Naive thymus-derived CD4-positive, alpha-beta T cell (primary cell): ENCODE measurements at regions of chr5 and their contacts with region 1.

Region 1: GRCh38 chr5:141618804-141619554 is at the start of gene DIAPH1:
- DNase-seq: peak; percentile 91 to 98 (median 96)
- ATAC-seq: peak; percentile 98
- H3K4me3 ChIP-seq: peak within 1 kb of the TSS; percentile 77
- H3K4me3 Mint-ChIP-seq: peak within 1 kb of the TSS; percentile 94 to 100 (median 100)
- H3K27ac ChIP-seq: peak within 1 kb of the TSS; percentile 97
- H3K27ac Mint-ChIP-seq: peak within 1 kb of the TSS; percentile 91 to 99 (median 95)
- H3K4me1 ChIP-seq: peaks cover 11 to 22% of the 10 kb centered on the region in 2 donors
- H3K4me1 Mint-ChIP-seq: peaks cover 44 to 61% (median 56%) of the 10 kb centered on the region in 7 donors
- H3K27me3 ChIP-seq: no peaks in the 10 kb centered on the region
- H3K27me3 Mint-ChIP-seq: no peaks in the 10 kb centered on the region
- total RNA-seq, gene DIAPH1: 163 to 278 (median 173) TPM

Region 2: GRCh38 chr5:141186897-141187512 is 432.0 kb before region 1 on chr5 and contains the start of gene PCDHB9:
- CTCF ChIA-PET with region 1: no interaction called
- POLR2A ChIA-PET with region 1: no interaction called
- intact Hi-C with region 1: no loop called
- DNase-seq: peak in 1 of 9 donors; percentile 14
- ATAC-seq: no peak
- H3K4me3 ChIP-seq: no peak within 1 kb of the TSS
- H3K4me3 Mint-ChIP-seq: peak within 1 kb of the TSS; percentile 15 to 64 (median 35)
- H3K27ac ChIP-seq: no peak within 1 kb of the TSS
- H3K27ac Mint-ChIP-seq: no peak within 1 kb of the TSS
- H3K4me1 ChIP-seq: no peaks in the 10 kb centered on the region
- H3K4me1 Mint-ChIP-seq: peaks cover 0 to 12% (median 5%) of the 10 kb centered on the region in 7 donors
- H3K27me3 ChIP-seq: no peaks in the 10 kb centered on the region
- H3K27me3 Mint-ChIP-seq: peaks cover 3 to 86% (median 76%) of the 10 kb centered on the region in 5 donors
- total RNA-seq, gene PCDHB9: 1.2 TPM in 1 of 5 experiments, not detected in the others

Region 3: DNA sequence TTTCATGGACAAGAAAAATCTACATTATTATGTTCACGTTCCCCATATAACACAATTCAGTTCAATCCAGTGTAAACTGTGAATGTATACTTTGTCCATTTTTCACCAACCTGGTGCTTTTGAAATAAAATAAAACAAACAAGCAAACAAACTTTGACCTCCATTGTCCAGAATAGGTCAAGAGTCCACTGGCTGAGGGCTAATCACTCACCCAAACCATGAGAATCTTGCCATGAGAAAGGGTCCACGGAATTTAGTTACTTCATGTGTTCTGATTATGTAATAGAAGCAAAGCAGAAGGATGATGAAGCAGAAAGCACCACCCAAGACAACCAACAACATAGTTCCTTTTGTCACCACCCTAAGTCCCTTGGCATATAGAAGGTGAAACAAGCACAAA is 28.9 kb before region 1 on chr5:
- CTCF ChIA-PET with region 1: interaction called, 222 read pairs
- POLR2A ChIA-PET with region 1: interaction called, 124 read pairs
- intact Hi-C with region 1: loop called (anchors 1 kb)
- DNase-seq: no peak
- ATAC-seq: peak; percentile 37
- H3K4me3 ChIP-seq: no peak overlapping the region
- H3K4me3 Mint-ChIP-seq: no peak overlapping the region
- H3K27ac ChIP-seq: no peak overlapping the region
- H3K27ac Mint-ChIP-seq: peak overlapping the region in 1 of 9 donors; percentile 56
- H3K4me1 ChIP-seq: peaks cover 12 to 13% of the 10 kb centered on the region in 2 donors
- H3K4me1 Mint-ChIP-seq: peaks cover 40 to 71% (median 58%) of the 10 kb centered on the region in 7 donors
- H3K27me3 ChIP-seq: no peaks in the 10 kb centered on the region
- H3K27me3 Mint-ChIP-seq: no peaks in the 10 kb centered on the region

Region 4: DNA sequence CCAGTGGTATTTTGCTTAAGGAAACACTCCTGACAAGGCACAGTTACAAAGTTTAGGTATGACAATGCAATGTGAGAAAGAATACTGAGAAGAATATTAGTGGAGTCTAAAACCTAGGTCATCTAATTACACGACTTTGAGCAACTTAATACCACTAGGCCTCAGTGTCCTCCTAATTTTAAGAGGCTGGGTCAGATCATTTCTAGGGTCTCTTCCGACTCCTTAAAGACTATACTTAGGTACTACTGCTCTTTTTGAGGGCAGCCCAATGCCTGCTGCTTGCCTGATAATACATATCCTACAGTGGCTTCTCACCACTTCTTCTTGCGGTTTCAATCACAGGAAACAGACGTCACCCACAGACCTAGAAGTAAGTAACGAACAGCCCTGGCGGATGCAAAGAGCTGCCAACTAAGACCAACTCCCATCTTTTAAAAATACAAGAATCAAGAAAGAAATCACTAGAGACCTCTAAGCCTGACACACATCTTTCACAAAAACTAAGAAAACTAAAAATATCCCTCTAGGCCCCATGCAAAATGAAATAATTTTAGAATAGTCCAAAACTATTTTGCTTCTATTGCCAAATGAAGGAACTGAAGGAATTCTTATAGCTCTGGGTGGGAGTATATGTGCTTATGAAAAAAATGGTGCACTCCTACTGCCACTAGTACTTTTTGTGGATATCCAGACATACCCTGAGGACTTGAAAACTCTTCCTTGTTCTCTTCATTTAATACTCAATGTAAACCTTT is 13.3 kb before region 1 on chr5:
- CTCF ChIA-PET with region 1: interaction called, 43 read pairs
- POLR2A ChIA-PET with region 1: interaction called, 71 read pairs
- intact Hi-C with region 1: loop called (anchors 1 kb)
- DNase-seq: peak in 8 of 9 donors; percentile 60 to 90 (median 88)
- ATAC-seq: peak; percentile 95
- H3K4me3 ChIP-seq: peak overlapping the region; percentile 37
- H3K4me3 Mint-ChIP-seq: peak overlapping the region; percentile 13 to 88 (median 80)
- H3K27ac ChIP-seq: peak overlapping the region; percentile 72
- H3K27ac Mint-ChIP-seq: peak overlapping the region; percentile 83 to 96 (median 89)
- H3K4me1 ChIP-seq: peaks cover 86 to 87% of the 10 kb centered on the region in 2 donors
- H3K4me1 Mint-ChIP-seq: peaks cover 60 to 97% (median 90%) of the 10 kb centered on the region in 7 donors
- H3K27me3 ChIP-seq: no peaks in the 10 kb centered on the region
- H3K27me3 Mint-ChIP-seq: no peaks in the 10 kb centered on the region

Region 5: GRCh38 chr5:141650851-141651727 is 32.1 kb after region 1 on chr5 and contains the start of gene FCHSD1:
- CTCF ChIA-PET with region 1: interaction called, 7 read pairs
- POLR2A ChIA-PET with region 1: interaction called, 5 read pairs
- intact Hi-C with region 1: loop called in 1 of 2 experiments (anchors 1 kb)
- DNase-seq: peak; percentile 64 to 88 (median 67)
- ATAC-seq: peak; percentile 98
- H3K4me3 ChIP-seq: peak within 1 kb of the TSS; percentile 62
- H3K4me3 Mint-ChIP-seq: peak within 1 kb of the TSS; percentile 60 to 97 (median 90)
- H3K27ac ChIP-seq: peak within 1 kb of the TSS; percentile 75
- H3K27ac Mint-ChIP-seq: peak within 1 kb of the TSS; percentile 56 to 95 (median 89)
- H3K4me1 ChIP-seq: peaks cover 15 to 19% of the 10 kb centered on the region in 2 donors
- H3K4me1 Mint-ChIP-seq: peaks cover 27 to 51% (median 37%) of the 10 kb centered on the region in 7 donors
- H3K27me3 ChIP-seq: no peaks in the 10 kb centered on the region
- H3K27me3 Mint-ChIP-seq: peaks cover 0 to 4% (median 0%) of the 10 kb centered on the region in 5 donors
- total RNA-seq, gene FCHSD1: 69.6 to 96.1 (median 92.3) TPM

Region 6: DNA sequence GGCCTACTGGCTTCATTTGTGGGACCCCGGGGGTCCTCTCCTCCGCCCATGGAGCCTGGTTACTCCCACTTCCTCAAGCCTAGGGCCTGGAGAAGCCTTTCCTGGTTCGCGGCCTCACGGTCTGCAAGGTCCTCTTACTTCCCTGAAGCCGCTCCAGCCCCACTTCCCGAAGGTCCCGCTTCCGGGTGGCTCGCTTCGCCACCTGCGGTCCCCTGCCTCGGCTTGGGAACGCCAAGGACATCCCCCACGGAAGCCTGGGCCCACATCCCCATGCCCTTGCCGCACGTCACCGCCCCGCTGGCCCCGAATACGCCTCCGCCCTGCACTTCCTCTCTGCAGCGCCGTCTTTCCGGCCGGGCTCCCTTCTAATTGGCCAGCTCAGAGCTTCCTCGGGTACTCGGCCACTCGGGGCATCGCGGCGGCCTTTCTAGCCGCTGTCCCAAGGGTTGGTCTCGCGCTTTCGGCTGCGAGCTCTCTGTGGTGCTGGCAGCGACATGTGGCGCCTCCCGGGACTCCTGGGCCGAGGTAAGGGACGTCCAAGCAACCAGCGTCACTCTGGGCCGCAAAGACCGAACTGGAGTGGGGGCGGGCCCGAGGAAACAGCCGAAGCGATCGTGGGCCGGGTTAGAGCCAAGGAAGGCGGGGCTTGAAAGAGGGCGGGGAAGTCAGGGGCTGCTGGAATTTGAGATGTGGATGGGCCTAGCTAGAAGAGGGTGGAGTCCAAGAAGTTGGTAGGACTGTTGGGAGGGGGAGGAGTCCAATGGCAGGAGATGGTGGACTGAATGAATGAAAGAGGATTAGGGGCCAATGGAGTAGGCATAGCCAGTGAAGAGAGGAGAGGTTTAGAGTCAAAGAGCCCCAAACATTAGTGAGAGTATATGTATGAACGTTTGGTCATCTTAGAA is 304.7 kb after region 1 on chr5 and contains the start of gene DELE1:
- CTCF ChIA-PET with region 1: no interaction called
- POLR2A ChIA-PET with region 1: no interaction called
- intact Hi-C with region 1: loop called in 1 of 2 experiments (anchors 1 kb)
- DNase-seq: peak; percentile 79 to 92 (median 90)
- ATAC-seq: peak; percentile 97
- H3K4me3 ChIP-seq: peak within 1 kb of the TSS; percentile 81
- H3K4me3 Mint-ChIP-seq: peak within 1 kb of the TSS; percentile 88 to 98 (median 94)
- H3K27ac ChIP-seq: peak within 1 kb of the TSS; percentile 98
- H3K27ac Mint-ChIP-seq: peak within 1 kb of the TSS; percentile 87 to 99 (median 98)
- H3K4me1 ChIP-seq: peaks cover 10 to 14% of the 10 kb centered on the region in 2 donors
- H3K4me1 Mint-ChIP-seq: peaks cover 23 to 54% (median 36%) of the 10 kb centered on the region in 7 donors
- H3K27me3 ChIP-seq: no peaks in the 10 kb centered on the region
- H3K27me3 Mint-ChIP-seq: no peaks in the 10 kb centered on the region
- total RNA-seq, gene DELE1: 77.3 to 101 (median 88.2) TPM

Region 7: DNA sequence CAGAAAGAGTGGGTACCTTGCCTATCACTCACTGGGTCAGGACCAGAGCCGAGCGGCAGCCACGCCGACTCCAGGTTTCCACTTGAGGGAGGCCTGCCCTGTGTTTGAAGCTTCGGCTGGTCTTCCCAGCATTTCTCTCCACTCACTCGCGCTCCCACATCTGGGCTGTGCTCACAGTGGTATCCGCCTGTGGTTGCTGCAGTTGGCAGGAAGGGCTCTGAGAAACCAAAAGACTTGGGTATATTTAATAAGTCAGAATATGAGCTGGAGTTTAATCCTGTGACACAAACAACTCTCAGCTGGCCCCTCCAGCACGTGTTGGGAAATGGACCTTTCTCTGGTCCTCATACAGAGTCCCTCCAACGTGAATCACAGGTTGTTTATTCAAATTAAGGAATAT is 635.0 kb after region 1 on chr5:
- CTCF ChIA-PET with region 1: no interaction called
- POLR2A ChIA-PET with region 1: no interaction called
- intact Hi-C with region 1: no loop called
- DNase-seq: no peak
- ATAC-seq: no peak
- H3K4me3 ChIP-seq: no peak overlapping the region
- H3K4me3 Mint-ChIP-seq: no peak overlapping the region
- H3K27ac ChIP-seq: no peak overlapping the region
- H3K27ac Mint-ChIP-seq: no peak overlapping the region
- H3K4me1 ChIP-seq: no peaks in the 10 kb centered on the region
- H3K4me1 Mint-ChIP-seq: peaks cover 0 to 3% (median 0%) of the 10 kb centered on the region in 7 donors
- H3K27me3 ChIP-seq: no peaks in the 10 kb centered on the region
- H3K27me3 Mint-ChIP-seq: peaks cover 0 to 3% (median 0%) of the 10 kb centered on the region in 5 donors